GM23248 (cell line): ENCODE measurements at regions of chr7 and their contacts with region 1.

Region 1: DNA sequence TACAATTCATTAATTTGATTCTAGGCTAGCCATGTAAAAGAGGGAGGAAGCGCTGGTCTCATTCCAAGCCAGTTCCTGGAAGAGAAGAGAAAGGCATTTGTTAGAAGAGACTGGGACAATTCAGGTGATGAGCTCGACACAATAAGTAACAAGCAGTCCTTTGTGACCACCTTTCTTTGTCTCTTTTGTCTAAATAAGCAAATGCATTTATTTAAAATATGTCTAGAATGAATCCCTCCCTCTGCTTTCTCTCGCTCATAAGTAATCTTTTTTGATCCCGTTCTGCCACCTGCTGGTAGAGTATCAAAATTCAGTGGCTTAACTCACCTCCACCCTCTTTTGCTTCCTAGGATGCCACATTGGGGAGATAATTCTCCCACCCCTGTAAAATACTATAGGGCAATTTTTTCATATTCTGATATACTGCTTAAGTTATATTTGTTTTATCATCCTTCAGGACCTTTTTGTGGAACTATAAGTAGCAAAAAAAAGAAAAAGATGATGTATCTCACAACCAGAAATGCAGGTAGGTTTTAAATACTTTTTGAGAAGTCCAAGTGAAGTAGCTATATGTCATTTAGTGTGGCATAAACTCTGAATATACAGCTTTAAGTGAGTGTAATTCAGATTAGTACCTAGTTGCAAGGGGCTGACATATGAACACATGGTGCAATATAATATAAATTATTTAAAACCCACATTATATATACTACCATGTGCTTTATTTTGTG is 91.5 kb downstream of the GSDME start:
- DNase-seq: peak; percentile 69
- H3K4me3 ChIP-seq: no peak overlapping the region
- H3K27ac ChIP-seq: no peak overlapping the region
- H3K4me1 ChIP-seq: peaks cover 14% of the 10 kb centered on the region
- H3K27me3 ChIP-seq: no peaks in the 10 kb centered on the region

Region 2: GRCh38 chr7:24401628-24402593 is 263.8 kb before region 1 on chr7:
- in situ Hi-C with region 1: loop called (anchors 25 kb)
- DNase-seq: peak; percentile 61
- H3K4me3 ChIP-seq: peak overlapping the region; percentile 50; the same call in 1 of the 2 replicates
- H3K27ac ChIP-seq: no peak overlapping the region
- H3K4me1 ChIP-seq: no peaks in the 10 kb centered on the region
- H3K27me3 ChIP-seq: peaks cover 7% of the 10 kb centered on the region; the same call in 1 of the 2 replicates